ENCODE measurements at regions of chr19 and their contacts with region 1.

Region 1: DNA sequence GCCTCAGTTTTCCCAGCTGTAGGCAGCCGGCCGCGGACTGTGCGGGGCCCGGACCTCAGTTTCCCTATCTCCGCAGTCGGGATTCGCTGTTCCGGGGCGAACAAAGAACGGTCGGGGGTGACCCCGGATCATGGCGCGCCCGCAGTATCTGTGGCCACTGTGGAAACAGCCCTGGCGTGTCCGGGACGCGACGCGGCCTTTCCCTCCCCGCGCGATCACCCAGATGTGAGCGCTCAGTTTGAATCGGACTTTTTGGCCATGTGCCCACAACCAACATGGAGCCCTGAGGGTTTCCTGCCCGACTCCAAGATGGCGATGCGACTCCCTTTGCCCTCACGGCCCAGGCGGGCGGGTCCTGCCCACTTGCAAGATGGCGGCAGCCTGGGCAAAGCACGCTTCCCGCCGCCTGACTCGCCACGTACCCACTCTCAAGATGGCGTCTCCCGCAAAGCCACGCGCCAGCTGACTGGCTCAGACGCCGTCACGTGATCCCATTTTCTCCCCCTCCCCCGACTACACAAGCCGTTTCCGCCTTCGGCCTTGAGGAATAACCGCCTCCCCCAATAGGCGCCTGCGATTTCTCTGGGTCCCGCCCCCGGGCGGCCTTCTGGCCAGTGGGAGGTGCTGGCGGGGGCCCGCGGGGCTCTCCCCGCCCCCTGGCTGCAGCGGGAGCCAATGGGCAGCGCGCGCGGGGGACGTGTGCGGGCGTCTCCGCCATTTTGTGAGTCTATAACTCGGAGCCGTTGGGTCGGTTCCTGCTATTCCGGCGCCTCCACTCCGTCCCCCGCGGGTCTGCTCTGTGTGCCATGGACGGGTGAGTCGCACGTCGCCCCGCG is at the start of gene PTBP1:
- DNase-seq: peak; percentile 100
- H3K4me3 ChIP-seq: peak within 1 kb of the TSS; percentile 90
- H3K27ac ChIP-seq: peak within 1 kb of the TSS; percentile 70
- H3K27me3 ChIP-seq: no peaks in the 10 kb centered on the region
- CTCF ChIP-seq: no peak
- polyA plus RNA-seq, gene PTBP1: 141 and 216 TPM in 2 replicates

Region 2: DNA sequence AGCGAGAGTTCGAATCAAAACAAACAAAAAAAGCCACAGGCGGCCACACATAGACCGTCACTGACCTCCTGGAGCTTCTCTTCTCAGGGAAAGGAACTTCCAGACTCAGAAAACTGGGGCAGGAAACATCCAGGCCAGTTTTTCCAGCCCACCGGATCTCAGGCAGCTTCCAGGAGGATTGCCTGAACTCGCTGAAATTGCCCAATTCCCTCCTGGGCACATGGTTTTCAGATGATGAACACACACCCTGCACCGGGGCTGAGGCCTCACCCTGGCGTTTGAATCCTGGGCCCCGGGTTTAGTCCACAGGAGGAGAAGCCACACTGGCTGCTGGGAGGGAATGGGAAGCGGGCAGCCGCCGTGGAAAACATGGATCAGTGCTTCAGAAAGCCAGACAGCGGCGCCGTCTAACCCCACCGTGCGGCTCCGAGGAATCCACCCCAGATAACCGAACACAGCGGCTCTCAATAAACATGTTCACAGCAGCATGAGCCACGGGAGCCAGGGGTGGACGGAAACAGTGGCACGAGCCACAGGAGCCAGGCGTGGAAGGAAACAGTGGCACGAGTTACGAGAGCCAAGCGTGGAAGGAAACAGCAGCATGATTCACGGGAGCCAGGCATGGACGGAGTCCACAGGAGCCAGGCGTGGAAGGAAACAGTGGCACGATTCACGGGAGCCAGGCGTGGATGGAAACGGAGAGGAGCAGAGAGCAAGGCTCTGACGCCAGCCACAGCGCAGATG is 17.8 kb before region 1 on chr19:
- CTCF ChIA-PET with region 1: no interaction called
- POLR2A ChIA-PET with region 1: interaction called, 11 read pairs
- DNase-seq: peak; percentile 85
- H3K4me3 ChIP-seq: no peak overlapping the region
- H3K27ac ChIP-seq: peak overlapping the region; percentile 90
- H3K27me3 ChIP-seq: no peaks in the 10 kb centered on the region
- CTCF ChIP-seq: no peak

Region 3: GRCh38 chr19:940591-941291 is 143.8 kb after region 1 on chr19:
- CTCF ChIA-PET with region 1: no interaction called
- POLR2A ChIA-PET with region 1: no interaction called
- DNase-seq: peak; percentile 49
- H3K4me3 ChIP-seq: no peak overlapping the region
- H3K27ac ChIP-seq: peak overlapping the region; percentile 68
- H3K27me3 ChIP-seq: no peaks in the 10 kb centered on the region
- CTCF ChIP-seq: no peak